ENCODE measurements at regions of chr5 and their contacts with region 1.

Region 1: GRCh38 chr5:177113566-177114424 is 19.8 kb upstream of the NSD1 start:
- DNase-seq: peak; percentile 87
- ATAC-seq: peak; percentile 69

Region 2: DNA sequence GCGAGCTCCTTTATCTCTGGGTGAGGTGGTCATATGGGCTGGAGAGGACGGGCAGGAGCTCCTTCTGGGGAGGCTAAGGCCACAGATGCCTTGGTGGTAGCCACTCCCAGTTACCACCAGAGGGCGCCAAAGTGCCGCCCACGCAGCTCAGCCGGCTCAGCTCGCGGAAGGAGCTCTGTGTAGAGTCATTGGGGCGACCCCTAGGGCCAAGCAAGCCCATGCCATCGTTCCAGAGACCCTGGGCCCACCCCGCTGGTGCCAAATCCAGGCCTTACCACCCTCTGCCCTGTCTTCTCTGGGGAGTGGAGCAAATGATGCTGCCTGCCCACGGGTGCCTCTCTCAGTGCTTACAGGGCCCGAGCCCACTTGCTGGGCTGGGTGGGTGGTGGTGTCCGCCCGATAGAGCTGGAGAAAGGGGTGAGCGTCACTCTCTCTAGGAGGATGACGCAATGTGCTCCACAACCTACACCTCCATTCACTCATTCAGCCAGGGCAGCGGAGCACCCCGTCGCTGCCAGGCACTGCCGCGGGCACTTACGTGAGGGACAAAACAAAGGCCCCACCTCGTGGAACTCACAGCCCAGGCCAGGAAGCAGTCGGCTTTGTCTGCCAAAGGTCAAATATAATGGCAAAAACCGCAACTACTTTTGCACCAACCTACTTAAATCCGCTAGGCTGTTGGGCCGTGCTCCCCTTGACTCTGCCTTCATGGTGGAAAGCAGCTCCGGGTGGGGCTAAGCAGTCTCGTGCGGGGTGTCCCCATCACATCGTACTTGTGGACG is 452.7 kb before region 1 on chr5:
- intact Hi-C with region 1: loop called (anchors 2 kb)
- DNase-seq: peak; percentile 81
- ATAC-seq: peak; percentile 84

Region 3: GRCh38 chr5:177071666-177072385 is 42.0 kb before region 1 on chr5:
- intact Hi-C with region 1: loop called (anchors 2 kb)
- DNase-seq: no peak
- ATAC-seq: peak; percentile 88

Region 4: GRCh38 chr5:177209610-177210009 is 95.8 kb after region 1 on chr5:
- intact Hi-C with region 1: no loop called
- DNase-seq: no peak
- ATAC-seq: no peak

Region 5: DNA sequence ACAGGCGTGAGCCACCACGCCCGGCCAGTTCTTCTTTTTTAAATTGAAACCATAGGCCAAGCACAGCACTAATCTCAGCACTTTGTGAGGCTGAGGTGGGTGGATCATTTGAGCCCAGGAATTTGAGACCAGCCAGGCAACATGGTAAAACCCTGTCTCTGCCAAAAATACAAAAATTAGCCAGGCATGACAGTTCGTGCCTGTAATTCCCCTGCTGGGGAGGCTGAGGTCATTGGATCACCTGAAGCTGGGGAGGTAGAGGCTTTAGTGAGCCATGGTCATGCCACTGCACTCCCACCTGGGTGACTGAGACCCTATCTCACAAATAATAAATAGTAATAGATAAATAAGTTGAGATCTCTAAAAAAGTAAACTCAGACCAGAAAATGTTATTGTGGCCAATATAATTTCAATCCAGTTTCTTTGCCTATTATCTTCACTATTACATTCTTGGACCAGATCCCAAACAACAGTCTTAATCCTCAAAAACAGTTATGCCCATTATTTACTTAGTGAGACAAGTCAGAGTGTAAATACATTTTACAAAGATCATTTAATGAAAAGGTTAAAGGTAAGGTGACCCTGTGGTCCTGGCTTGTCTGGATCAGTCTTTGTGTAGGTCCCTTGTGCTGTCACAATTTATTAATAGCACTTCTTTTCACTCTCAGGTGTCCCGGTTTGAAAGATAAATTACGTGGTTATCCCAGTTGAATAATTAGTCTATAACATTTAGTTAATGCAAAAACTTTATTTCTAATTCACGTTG is 136.1 kb after region 1 on chr5:
- intact Hi-C with region 1: loop called (anchors 10 kb)
- DNase-seq: no peak
- ATAC-seq: no peak